GM12878 (cell line): ENCODE measurements at regions of chr4 and their contacts with region 1.

Region 1: DNA sequence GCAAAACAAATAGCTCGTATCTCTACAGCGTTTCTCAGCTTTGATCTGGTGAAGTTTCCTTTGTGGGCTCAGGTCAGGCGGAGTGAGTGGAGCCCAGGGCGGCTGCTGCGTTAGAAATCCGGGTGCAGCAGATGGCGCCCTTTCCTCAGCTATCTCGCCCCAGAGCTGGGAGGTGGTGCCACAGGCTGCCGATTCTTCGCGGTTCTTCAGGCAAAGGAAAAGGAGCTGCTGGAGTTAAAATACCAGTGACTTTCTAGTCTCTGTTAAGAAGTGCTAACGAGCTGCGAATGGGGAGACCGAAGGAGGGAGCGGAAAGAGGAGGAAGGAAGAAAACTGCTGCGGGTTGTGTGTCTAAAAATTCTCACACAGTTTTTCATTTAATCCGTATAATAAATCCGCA is 114.6 kb downstream of the CPE start:
- DNase-seq: no peak
- ATAC-seq: peak; percentile 98
- H3K4me3 ChIP-seq: no peak overlapping the region
- H3K27ac ChIP-seq: no peak overlapping the region
- H3K4me1 ChIP-seq: no peaks in the 10 kb centered on the region
- H3K27me3 ChIP-seq: no peaks in the 10 kb centered on the region
- CTCF ChIP-seq: peak; percentile 68 to 85 (median 73)
- EP300 ChIP-seq: no peak
- POLR2A ChIP-seq: no peak
- RAD21 ChIP-seq: peak; percentile 80

Region 2: DNA sequence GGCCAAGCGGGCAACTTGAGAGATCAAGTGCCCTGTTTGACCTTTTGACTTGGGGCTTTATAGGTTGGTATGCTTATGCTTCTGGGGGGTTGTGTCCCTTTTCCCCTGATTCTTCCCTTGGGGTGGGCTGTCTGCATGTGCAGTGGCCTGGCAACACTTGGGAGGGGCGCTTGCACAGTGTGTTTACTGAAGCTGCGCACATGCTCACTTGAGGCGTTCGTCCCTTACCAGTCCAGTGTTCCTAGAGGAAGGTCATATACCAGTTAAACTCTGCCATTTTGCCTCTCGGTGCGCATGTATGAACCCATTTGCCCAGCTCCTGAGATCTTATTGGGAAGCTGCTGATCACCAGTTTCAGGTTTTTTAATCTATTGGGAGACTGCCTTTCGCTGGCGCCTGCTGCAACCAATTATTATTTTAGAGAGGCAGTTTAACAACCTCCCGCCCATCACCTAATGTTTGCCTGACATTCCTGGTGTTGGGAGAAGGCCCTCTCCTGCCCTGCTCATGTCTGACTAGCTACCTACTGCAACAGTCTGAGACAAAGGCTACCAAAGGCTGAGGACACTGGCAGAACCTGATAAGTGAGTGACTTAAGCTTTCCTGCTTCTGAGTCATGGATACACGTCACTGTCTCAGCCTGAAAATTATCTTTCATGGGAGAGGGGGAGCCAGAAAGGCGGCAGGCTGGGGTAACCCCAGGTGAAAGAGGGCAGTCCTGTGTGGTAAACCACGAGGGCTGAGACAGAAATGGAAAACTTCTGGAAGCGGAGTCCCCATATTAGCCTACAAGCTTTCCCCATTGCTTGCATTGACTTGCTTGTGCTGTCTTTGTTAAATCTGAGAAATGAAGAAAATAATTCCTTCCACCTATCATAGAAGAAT is 16.9 kb before region 1 on chr4:
- CTCF ChIA-PET with region 1: interaction called, 11 read pairs
- POLR2A ChIA-PET with region 1: no interaction called
- RAD21 ChIA-PET with region 1: interaction called, 3 read pairs
- SMC1A ChIA-PET with region 1: interaction called, 5 read pairs
- in situ Hi-C with region 1: no loop called
- intact Hi-C with region 1: no loop called
- DNase-seq: no peak
- ATAC-seq: no peak
- H3K4me3 ChIP-seq: no peak overlapping the region
- H3K27ac ChIP-seq: no peak overlapping the region
- H3K4me1 ChIP-seq: no peaks in the 10 kb centered on the region
- H3K27me3 ChIP-seq: no peaks in the 10 kb centered on the region
- CTCF ChIP-seq: no peak
- EP300 ChIP-seq: no peak
- POLR2A ChIP-seq: no peak
- RAD21 ChIP-seq: no peak

Region 3: GRCh38 chr4:165537028-165537648 is 43.8 kb after region 1 on chr4:
- CTCF ChIA-PET with region 1: interaction called, 10 read pairs
- POLR2A ChIA-PET with region 1: no interaction called
- RAD21 ChIA-PET with region 1: interaction called, 14 read pairs
- SMC1A ChIA-PET with region 1: interaction called, 7 read pairs
- in situ Hi-C with region 1: no loop called
- intact Hi-C with region 1: no loop called
- DNase-seq: no peak
- ATAC-seq: peak; percentile 79
- H3K4me3 ChIP-seq: no peak overlapping the region
- H3K27ac ChIP-seq: no peak overlapping the region
- H3K4me1 ChIP-seq: no peaks in the 10 kb centered on the region
- H3K27me3 ChIP-seq: no peaks in the 10 kb centered on the region; a peak in 1 of 4 replicates
- CTCF ChIP-seq: peak; percentile 45 to 67 (median 54); a peak in 5 of 6 replicates
- EP300 ChIP-seq: no peak
- POLR2A ChIP-seq: no peak
- RAD21 ChIP-seq: peak; percentile 69